GM12878 (cell line): ENCODE measurements at regions of chr1 and their contacts with region 1.

Region 1: GRCh38 chr1:199113265-199113869 is 474.5 kb downstream of the PTPRC start:
- DNase-seq: peak; percentile 43
- ATAC-seq: peak; percentile 92
- H3K4me3 ChIP-seq: no peak overlapping the region
- H3K27ac ChIP-seq: no peak overlapping the region
- H3K4me1 ChIP-seq: no peaks in the 10 kb centered on the region
- H3K27me3 ChIP-seq: no peaks in the 10 kb centered on the region
- CTCF ChIP-seq: peak; percentile 58 to 87 (median 77)
- EP300 ChIP-seq: no peak
- POLR2A ChIP-seq: no peak
- RAD21 ChIP-seq: peak; percentile 91

Region 2: GRCh38 chr1:198788561-198789064 is 324.8 kb before region 1 on chr1:
- CTCF ChIA-PET with region 1: interaction called, 20 read pairs
- POLR2A ChIA-PET with region 1: no interaction called
- RAD21 ChIA-PET with region 1: interaction called, 12 read pairs
- SMC1A ChIA-PET with region 1: interaction called, 25 read pairs
- in situ Hi-C with region 1: no loop called
- intact Hi-C with region 1: no loop called
- DNase-seq: no peak
- ATAC-seq: peak; percentile 99
- H3K4me3 ChIP-seq: no peak overlapping the region
- H3K27ac ChIP-seq: no peak overlapping the region
- H3K4me1 ChIP-seq: no peaks in the 10 kb centered on the region
- H3K27me3 ChIP-seq: no peaks in the 10 kb centered on the region
- CTCF ChIP-seq: peak; percentile 30 to 37 (median 32); a peak in 3 of 6 replicates
- EP300 ChIP-seq: peak in 1 of 2 experiments; percentile 11; a peak in 1 of 4 replicates
- POLR2A ChIP-seq: no peak
- RAD21 ChIP-seq: peak; percentile 48; the same call in 1 of the 2 replicates

Region 3: GRCh38 chr1:198929961-198930599 is 183.3 kb before region 1 on chr1:
- CTCF ChIA-PET with region 1: interaction called, 15 read pairs
- POLR2A ChIA-PET with region 1: no interaction called
- RAD21 ChIA-PET with region 1: interaction called, 18 read pairs
- SMC1A ChIA-PET with region 1: interaction called, 34 read pairs
- in situ Hi-C with region 1: no loop called
- intact Hi-C with region 1: no loop called
- DNase-seq: peak; percentile 45
- ATAC-seq: peak; percentile 69
- H3K4me3 ChIP-seq: peak overlapping the region; percentile 59
- H3K27ac ChIP-seq: peak overlapping the region; percentile 76
- H3K4me1 ChIP-seq: peaks cover 2% of the 10 kb centered on the region; the same call in 1 of the 2 replicates
- H3K27me3 ChIP-seq: no peaks in the 10 kb centered on the region
- CTCF ChIP-seq: no peak
- EP300 ChIP-seq: no peak
- POLR2A ChIP-seq: no peak
- RAD21 ChIP-seq: no peak

Region 4: DNA sequence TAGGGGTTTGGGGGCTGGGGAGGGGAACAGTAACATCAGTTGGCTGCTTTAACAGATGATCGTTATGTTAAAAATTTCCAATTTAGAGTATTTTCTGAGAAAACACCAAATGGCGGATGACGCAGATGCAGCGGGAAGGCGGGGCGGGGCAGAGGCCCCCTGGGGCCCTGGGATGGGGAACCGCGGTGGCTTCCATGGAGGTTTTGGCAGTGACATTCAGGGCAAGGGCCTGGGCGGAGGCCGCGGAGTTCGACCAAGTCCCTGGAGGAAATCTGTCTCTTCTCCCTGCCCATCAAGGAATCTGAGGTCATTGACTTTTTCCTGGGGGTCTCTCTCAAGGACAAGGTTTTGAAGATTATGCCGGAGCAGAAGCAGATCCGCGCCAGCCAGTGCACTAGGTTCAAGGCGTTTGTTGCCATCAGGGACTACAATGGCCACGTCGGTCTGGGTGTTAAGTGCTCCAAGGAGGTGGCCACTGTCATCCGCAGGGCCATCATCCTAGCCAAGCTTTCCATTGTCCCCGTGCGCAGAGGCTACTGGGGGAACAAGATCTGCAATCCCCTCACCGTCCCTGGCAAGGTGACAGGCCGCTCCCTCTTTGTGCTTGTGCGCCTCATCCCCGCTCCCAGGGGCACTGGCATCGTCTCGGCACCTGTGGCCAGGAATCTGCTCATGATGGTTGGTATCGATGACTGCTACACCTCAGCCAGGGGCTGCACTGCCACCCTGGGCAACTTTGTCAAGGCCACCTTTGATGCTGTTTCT is 164.3 kb before region 1 on chr1:
- CTCF ChIA-PET with region 1: no interaction called
- POLR2A ChIA-PET with region 1: no interaction called
- RAD21 ChIA-PET with region 1: no interaction called
- SMC1A ChIA-PET with region 1: no interaction called
- in situ Hi-C with region 1: no loop called
- intact Hi-C with region 1: no loop called
- DNase-seq: no peak
- ATAC-seq: no peak
- H3K4me3 ChIP-seq: no peak overlapping the region
- H3K27ac ChIP-seq: no peak overlapping the region
- H3K4me1 ChIP-seq: no peaks in the 10 kb centered on the region
- H3K27me3 ChIP-seq: no peaks in the 10 kb centered on the region
- CTCF ChIP-seq: no peak
- EP300 ChIP-seq: no peak
- POLR2A ChIP-seq: no peak
- RAD21 ChIP-seq: no peak

Region 5: DNA sequence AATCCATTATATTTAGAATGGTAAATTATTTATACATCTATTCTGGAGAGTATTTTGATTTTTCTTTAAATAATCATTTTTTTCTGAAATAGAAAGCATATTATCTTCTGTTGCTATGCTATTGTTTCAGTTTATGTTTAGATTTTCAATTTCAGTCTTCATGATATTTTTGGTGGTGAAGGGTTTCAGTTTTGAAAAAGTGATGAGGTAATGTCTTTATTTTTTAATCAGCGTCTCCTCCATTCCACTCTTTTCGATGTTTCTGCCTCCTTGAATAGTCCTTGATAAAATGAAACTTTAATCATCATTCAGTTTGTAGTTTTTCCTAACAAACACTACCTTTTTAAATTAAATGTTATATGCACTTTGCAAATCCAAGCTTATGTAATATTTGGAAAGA is 45.9 kb before region 1 on chr1:
- CTCF ChIA-PET with region 1: interaction called, 10 read pairs
- POLR2A ChIA-PET with region 1: no interaction called
- RAD21 ChIA-PET with region 1: interaction called, 14 read pairs
- SMC1A ChIA-PET with region 1: interaction called, 7 read pairs
- in situ Hi-C with region 1: no loop called
- intact Hi-C with region 1: no loop called
- DNase-seq: no peak
- ATAC-seq: peak; percentile 90
- H3K4me3 ChIP-seq: 0 out of 2 replicates have a peak overlapping the region, but pooled peaks have one; percentile 11
- H3K27ac ChIP-seq: peak overlapping the region; percentile 61; the same call in 1 of the 2 replicates
- H3K4me1 ChIP-seq: peaks cover 7% of the 10 kb centered on the region; the same call in 1 of the 2 replicates
- H3K27me3 ChIP-seq: no peaks in the 10 kb centered on the region
- CTCF ChIP-seq: no peak
- EP300 ChIP-seq: peak in 1 of 2 experiments; percentile 60; a peak in 1 of 4 replicates
- POLR2A ChIP-seq: no peak
- RAD21 ChIP-seq: no peak

Region 6: DNA sequence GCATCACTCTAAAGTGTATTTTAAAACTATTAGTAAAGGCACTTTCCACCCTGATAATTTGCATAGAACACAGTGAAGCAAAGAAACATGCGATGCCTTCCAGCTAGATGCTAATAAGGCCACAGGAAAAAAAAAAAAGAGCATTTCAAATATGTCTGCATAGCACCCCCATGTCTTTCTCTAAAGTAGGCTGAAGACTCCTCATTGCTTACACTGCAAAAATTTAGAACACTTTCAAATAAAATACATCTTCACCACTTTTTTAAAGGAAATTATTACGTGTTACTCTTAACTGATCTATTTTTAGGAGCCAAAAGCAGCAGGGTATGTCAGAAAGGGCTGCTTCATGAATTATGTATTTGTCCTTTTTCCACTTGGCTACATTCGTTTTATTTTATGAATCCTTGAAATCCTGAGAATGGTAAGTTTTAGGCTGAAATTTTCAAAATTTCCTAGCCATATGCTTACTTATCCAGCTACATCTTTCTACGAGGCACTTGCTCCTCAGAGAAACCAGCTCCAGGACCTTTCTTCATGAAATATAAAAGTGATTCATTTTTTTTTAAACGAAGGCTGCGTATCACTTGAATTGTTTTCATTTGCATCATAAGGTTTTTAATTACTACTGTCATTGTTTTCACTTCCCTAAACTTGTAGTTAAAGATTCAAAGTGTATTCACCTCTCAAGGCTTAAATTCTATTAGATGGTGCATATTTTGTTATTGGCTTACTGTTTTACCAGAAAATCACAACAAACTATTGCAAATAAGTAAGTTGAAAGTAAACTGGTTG is 38.5 kb after region 1 on chr1:
- CTCF ChIA-PET with region 1: interaction called, 5 read pairs
- POLR2A ChIA-PET with region 1: no interaction called
- RAD21 ChIA-PET with region 1: no interaction called
- SMC1A ChIA-PET with region 1: interaction called, 10 read pairs
- in situ Hi-C with region 1: no loop called
- intact Hi-C with region 1: no loop called
- DNase-seq: no peak
- ATAC-seq: peak; percentile 85
- H3K4me3 ChIP-seq: no peak overlapping the region; the same call in 1 of the 2 replicates
- H3K27ac ChIP-seq: peak overlapping the region; percentile 13; the same call in 1 of the 2 replicates
- H3K4me1 ChIP-seq: peaks cover 12% of the 10 kb centered on the region; the same call in 1 of the 2 replicates
- H3K27me3 ChIP-seq: no peaks in the 10 kb centered on the region
- CTCF ChIP-seq: no peak
- EP300 ChIP-seq: peak; percentile 78 to 82; a peak in 3 of 4 replicates
- POLR2A ChIP-seq: no peak
- RAD21 ChIP-seq: no peak